ENCODE measurements at regions of chr5 and their contacts with region 1.

Region 1: DNA sequence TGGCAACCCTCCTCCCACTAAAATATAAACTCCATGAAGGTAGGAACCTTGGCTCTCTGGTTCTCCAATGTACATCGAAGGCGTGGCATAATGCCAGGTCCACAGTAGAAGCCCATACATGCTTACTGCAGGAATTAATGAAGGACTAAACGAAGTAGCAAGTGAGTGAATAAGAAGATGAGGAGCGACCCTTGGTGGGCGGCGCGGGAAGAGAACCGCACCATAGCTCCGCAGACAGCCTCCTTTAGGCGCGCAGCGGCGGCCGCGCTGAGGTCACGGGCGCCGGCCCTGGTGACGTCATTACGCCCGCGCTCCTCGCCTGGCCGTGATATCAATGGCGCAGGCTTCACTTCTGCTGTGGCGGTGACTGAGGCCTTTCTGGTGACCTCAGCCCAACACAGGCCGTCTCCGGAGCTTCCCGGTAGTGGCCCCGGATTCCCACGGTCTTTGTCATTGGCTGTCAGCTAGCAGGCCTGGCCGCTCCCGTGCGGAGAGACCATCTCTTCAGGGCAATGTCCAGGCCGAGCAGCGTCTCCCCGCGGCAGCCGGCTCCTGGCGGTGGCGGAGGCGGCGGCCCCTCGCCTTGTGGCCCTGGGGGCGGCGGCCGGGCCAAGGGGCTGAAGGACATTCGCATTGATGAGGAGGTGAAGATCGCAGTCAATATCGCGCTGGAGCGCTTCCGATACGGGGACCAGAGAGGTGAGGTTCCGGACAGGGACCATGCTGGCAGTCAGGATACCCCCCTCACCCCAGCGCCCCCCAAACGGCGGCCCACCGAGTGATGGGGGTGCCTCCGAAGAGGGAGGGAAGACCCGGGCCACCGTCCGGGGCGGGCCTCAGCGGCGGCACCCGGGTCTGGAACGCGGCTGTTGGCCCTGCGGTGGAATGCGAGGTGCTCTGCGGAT is at the start of gene YTHDC2:
- H3K4me3 Mint-ChIP-seq: peak within 1 kb of the TSS; percentile 89
- H3K27ac Mint-ChIP-seq: peak within 1 kb of the TSS; percentile 96
- H3K4me1 Mint-ChIP-seq: peaks cover 36% of the 10 kb centered on the region
- H3K27me3 Mint-ChIP-seq: peaks cover 26% of the 10 kb centered on the region

Region 2: GRCh38 chr5:112921833-112922817 is 591.5 kb before region 1 on chr5 and contains the start of gene REEP5:
- intact Hi-C with region 1: loop called (anchors 5 kb)
- H3K4me3 Mint-ChIP-seq: peak within 1 kb of the TSS; percentile 100
- H3K27ac Mint-ChIP-seq: peak within 1 kb of the TSS; percentile 100
- H3K4me1 Mint-ChIP-seq: peaks cover 64% of the 10 kb centered on the region
- H3K27me3 Mint-ChIP-seq: no peaks in the 10 kb centered on the region

Region 3: DNA sequence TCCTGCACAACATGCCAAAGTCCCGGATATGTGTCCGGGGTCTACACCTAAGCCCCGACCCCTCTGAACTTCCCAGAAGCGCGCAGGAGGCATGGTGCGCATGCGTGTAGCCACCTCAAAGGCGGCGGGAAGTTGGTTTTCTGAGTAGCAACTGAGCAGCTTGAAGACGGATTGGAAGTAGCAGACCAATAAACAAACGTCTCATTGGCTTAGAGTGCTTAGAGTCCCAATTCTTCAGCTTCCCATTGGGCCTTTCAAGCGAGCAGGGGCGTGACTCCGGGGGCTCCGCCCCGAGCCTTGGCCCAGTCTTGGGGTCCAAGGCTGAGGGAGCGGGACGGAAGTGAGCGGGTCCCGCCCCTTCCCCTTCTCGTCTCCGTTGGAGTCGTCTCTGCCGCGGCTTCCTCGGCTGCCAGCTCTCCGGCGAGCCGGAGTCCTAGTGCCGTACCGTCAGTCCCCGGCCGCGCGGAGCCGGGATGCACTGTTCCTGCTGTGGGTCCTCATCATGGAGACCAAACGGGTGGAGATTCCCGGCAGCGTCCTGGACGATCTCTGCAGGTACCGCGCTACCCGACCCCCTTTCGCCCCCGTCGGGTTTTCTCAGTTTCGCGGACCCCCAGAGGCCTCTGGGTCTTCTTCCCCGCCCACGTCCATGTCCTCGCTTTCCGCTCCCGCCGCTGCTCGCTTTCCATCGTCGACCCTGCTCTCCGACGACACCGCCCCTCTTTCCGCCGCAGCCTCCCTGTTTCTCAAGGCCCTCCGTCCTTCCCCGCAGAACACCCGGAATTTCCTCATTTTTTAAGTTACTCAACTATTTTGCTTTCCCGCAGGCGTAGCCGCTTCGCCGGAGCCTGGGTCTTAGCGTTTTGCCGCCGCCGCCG is 537.0 kb before region 1 on chr5 and contains the start of gene DCP2:
- intact Hi-C with region 1: loop called (anchors 5 kb)
- H3K4me3 Mint-ChIP-seq: peak within 1 kb of the TSS; percentile 99
- H3K27ac Mint-ChIP-seq: peak within 1 kb of the TSS; percentile 100
- H3K4me1 Mint-ChIP-seq: peaks cover 26% of the 10 kb centered on the region
- H3K27me3 Mint-ChIP-seq: no peaks in the 10 kb centered on the region

Region 4: DNA sequence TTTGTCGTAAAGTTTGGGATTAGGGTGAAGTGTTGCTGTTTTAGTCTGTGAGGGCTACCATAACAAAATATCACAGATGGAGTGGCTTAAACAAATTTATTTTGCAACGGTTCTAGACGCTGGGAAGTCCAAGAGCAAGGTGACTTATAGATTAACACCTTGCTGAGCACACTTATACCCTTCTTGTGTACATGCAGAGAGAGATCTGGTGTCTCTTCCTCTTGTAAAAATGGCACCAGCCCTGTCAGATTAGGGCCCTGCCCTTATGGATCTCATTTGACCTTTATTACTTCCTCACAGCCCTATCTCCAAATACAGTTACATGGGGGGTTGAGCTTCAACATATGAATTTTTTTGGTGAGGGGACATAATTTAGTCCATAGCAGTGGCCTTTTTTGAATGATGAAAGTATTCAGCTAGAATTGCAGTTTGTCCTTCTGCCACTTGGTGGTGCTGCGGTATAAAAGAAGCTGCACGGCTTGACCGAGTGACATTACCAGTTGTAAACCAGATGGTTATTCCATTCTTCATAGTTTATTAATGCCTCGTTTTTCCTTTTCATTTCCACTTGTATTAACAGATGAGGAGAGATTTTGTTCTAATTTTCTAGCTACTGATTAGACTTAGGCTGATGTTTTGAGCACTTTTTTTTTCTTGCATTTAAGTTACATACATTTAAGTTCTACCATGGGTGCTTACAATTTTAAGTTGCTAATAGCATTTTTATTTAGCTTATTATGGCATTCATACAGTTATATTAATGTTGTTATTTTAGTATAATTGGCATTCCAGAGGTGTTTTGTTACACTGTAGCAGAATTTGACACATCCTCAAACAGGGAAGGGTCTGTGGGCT is 517.6 kb before region 1 on chr5:
- intact Hi-C with region 1: loop called (anchors 5 kb)
- H3K4me3 Mint-ChIP-seq: no peak overlapping the region
- H3K27ac Mint-ChIP-seq: no peak overlapping the region
- H3K4me1 Mint-ChIP-seq: no peaks in the 10 kb centered on the region
- H3K27me3 Mint-ChIP-seq: no peaks in the 10 kb centered on the region

Region 5: GRCh38 chr5:113378959-113379541 is 134.6 kb before region 1 on chr5:
- intact Hi-C with region 1: loop called (anchors 5 kb)
- H3K4me3 Mint-ChIP-seq: no peak overlapping the region
- H3K27ac Mint-ChIP-seq: no peak overlapping the region
- H3K4me1 Mint-ChIP-seq: peaks cover 8% of the 10 kb centered on the region
- H3K27me3 Mint-ChIP-seq: peaks cover 57% of the 10 kb centered on the region

Region 6: DNA sequence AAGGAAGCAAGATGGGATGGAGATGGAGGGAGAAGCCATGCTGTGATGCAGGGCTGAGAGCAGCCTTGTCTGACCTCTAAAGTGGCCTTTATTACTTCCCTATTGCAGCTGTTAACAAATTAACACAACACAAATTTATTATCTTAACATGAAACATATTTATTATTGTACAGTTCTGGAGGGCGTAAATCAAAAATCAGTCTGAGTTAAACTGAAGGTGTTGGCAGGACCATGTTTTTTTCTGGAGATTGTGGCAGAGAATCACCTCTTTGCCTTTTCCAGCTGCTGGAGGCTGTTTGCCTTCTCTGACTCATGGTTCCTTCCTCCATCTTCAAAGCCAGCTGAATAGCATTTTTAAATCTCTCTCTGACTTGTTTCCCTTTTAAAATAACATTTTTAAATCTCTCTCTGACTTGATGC is 18.2 kb before region 1 on chr5:
- intact Hi-C with region 1: no loop called
- H3K4me3 Mint-ChIP-seq: no peak overlapping the region
- H3K27ac Mint-ChIP-seq: no peak overlapping the region
- H3K4me1 Mint-ChIP-seq: no peaks in the 10 kb centered on the region
- H3K27me3 Mint-ChIP-seq: peaks cover 84% of the 10 kb centered on the region